Lower leg skin (tissue), 4 donors: ENCODE measurements at regions of chr7 and their contacts with region 1.

Region 1: GRCh38 chr7:76185187-76185896 is 16.4 kb upstream of the SRRM3 start:
- DNase-seq: no peak
- H3K4me3 ChIP-seq: no peak overlapping the region
- CTCF ChIP-seq: no peak
- POLR2A ChIP-seq: no peak

Region 2: DNA sequence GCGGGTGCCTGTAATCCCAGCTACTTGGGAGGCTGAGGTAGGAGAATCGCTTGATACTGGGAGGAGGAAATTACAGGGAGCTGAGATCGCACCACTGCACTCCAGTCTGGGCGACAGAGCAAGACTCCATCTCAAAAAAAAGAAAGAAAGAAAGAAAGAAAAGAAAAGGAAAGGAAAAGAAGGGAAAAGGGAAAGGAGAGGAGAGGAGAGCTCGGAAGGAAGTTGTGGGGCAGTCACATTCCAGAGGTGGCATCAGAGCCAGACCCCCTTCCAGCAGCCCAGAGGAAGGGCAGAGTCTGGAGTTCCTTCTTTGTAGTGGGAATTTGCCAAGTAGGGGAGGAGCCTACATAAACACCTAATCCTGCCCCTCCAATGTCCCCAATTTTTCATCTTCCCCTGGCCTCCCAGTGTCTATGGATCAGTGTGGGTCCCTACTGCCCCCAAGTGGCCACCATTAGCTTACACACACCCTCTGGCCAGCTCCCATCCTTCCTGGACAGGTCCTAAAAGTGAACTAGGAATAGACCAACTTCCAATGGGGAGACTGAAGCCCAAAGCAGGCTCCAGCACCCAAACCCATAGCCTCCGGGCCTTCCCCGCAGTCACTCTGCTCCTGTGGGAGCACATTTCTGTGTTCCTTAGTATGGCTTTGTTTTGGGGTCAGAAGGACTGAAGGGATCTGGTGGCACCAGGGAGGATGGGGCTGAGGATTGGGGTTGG is 77.5 kb after region 1 on chr7:
- intact Hi-C with region 1: loop called (anchors 10 kb)
- DNase-seq: no peak
- H3K4me3 ChIP-seq: no peak overlapping the region
- CTCF ChIP-seq: peak in 1 of 3 donors; percentile 27
- POLR2A ChIP-seq: no peak

Region 3: GRCh38 chr7:76314042-76314721 is 128.8 kb after region 1 on chr7:
- intact Hi-C with region 1: loop called (anchors 2 kb)
- DNase-seq: peak; percentile 96 to 100
- H3K4me3 ChIP-seq: no peak overlapping the region
- CTCF ChIP-seq: peak in 2 of 3 donors; percentile 95 to 99
- POLR2A ChIP-seq: no peak